Common myeloid progenitor, CD34-positive (primary cell): ENCODE measurements at regions of chr15 and their contacts with region 1.

Region 1: DNA sequence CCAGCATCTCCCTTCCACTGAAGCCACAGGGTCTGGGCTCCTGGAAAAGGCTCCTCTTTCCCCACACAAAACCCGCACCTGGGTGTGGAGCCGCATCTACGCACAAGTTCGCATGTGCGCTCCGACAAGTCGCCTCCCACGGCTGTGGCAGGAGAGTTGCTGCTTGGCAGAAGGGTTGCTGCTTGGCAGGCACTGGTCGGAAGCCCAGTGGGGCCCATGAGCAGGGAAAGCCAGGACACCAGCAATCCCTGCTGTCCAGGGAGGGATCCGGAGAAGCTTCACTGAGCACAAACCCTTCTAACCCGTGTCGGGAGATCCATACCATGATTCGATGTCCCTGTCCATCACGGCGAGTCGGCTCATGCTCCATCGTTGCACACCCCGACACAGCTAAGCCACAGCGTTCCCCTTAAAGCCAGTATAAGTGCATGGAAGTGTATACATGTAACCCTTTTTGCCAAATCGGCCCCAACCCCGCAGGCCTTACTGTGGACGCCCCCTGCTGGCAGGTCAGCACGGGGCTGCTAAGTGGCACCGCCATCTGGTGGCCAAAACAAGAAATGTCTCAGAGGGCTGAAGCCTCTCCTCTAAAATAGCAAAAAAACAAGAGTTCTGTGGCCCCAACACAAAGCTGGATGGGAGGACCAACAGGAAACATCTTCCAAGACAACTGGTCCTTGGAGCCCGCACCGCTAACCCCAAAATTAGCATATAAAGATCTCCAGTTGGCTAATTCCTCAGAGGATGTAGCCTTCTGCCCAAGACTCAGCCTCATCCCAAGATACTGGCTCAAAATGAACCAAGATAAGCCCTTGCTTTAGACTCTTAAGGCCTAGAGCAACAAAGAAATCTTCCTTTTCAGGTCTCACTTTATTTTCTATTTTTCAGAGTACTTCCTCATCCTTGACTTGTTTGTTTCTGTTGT is 8.3 kb downstream of the ANKRD63 start:
- DNase-seq: peak; percentile 86 to 93 (median 91)
- H3K4me3 ChIP-seq: no peak overlapping the region
- H3K27ac ChIP-seq: no peak overlapping the region
- H3K4me1 ChIP-seq: peaks cover 0 to 42% (median 23%) of the 10 kb centered on the region in 4 experiments
- H3K27me3 ChIP-seq: no peaks in the 10 kb centered on the region

Region 2: DNA sequence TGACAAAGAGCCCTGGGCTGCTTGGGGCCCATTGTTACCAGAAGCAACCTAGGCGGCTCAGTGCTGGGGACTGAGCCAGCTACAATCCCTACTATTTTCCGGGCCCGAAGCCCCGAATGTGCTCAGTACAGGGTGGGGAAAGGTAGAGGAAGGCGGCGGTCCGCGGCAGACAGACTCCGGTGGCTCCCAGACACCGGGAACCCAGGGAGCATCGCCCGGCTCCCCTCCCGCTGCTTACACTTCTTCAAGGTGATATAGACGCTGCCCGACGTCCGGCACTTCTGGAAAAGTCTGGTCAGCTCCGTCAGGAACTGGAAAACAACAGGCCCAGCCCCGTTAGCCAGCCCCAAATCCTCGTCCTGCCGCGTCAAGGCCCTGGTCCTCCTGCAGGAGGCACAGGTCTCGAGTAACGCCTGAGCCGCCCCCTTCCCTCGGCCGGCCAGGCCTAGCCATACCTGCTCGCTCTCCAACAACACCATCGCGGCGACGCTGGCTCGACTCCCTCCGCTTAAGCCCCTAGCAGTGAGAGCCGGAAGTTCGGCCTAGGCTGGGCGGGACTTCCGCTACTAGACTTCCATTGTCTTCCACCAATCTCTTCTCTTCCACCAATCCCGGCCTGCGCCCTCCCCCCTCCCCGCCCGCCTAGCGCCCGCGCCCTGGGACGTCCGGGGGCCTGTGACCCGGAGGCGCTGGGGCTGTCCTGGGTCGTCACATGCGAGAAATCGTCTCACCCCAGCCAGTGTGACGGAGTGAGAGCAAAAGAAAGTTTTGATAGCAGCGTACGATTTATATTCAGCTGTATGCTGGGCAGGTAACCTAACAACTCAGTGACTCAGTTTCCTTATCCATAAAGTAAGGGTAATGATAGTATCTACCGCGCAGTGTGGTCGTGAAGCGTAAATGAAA is 235.7 kb before region 1 on chr15 and contains the start of gene SRP14:
- CTCF ChIA-PET with region 1: interaction called, 22 read pairs
- POLR2A ChIA-PET with region 1: no interaction called
- DNase-seq: peak; percentile 95 to 97 (median 96)
- H3K4me3 ChIP-seq: peak within 1 kb of the TSS; percentile 59 to 97 (median 94)
- H3K27ac ChIP-seq: peak within 1 kb of the TSS; percentile 92 to 96
- H3K4me1 ChIP-seq: peaks cover 7 to 24% (median 17%) of the 10 kb centered on the region in 4 experiments
- H3K27me3 ChIP-seq: no peaks in the 10 kb centered on the region

Region 3: DNA sequence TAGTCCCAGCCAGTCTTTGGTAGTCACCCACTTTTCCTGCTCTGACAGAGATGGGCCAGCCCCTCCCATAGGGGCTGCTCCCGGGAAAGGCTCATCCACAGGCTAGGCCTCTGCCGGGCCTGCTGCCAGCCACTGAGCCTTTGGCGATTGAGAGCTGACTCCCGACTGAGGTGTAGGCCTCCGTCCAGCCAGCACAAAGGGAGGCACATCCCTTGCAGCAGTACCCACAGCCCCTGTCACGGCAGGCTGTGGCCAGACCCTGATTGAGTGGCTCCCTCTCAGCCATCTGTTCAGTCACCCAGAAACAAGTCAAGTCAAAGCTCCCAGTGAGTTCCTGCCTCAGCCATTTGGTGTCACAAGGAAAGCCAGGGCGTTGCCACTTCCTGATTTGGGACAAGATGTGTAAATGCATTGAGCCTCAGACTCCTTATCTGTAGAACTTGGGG is 42.0 kb before region 1 on chr15:
- CTCF ChIA-PET with region 1: interaction called, 98 read pairs
- POLR2A ChIA-PET with region 1: no interaction called
- DNase-seq: no peak
- H3K4me3 ChIP-seq: no peak overlapping the region
- H3K27ac ChIP-seq: no peak overlapping the region
- H3K4me1 ChIP-seq: peaks cover 4 to 24% (median 14%) of the 10 kb centered on the region in 4 experiments
- H3K27me3 ChIP-seq: no peaks in the 10 kb centered on the region

Region 4: DNA sequence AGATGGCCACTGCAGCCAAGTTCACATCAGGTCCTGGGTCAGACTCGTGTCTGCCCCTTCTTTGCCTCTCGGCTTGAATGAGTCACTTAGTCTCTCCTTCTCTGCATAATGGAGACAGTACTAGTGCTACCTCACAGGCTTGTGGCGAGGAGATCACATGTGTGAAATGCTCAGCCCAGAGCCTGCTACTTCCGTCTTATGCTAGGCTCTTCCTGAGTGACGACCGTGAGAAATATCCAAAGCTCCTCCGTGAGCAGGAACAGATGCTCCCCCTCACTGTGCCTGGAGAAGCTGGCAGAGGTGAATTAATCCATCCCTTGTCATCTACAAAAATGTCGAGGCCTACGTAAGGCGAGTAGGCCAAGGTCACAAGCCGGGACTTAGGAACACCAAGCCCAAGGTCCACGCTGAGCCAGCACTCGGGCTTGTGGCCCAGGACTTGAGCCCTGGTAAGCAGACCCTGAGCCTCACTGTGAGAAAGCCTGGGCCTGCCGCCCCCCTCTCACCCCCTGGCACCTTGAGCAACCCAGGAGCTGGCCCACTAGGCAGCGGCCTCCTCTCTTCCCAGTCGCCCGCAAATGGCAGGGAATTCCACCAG is 17.9 kb before region 1 on chr15:
- CTCF ChIA-PET with region 1: interaction called, 49 read pairs
- POLR2A ChIA-PET with region 1: no interaction called
- DNase-seq: peak in 1 of 3 donors; percentile 40
- H3K4me3 ChIP-seq: no peak overlapping the region
- H3K27ac ChIP-seq: no peak overlapping the region
- H3K4me1 ChIP-seq: peaks cover 0 to 17% (median 16%) of the 10 kb centered on the region in 4 experiments
- H3K27me3 ChIP-seq: peaks cover 0 to 29% (median 11%) of the 10 kb centered on the region in 5 experiments

Region 5: DNA sequence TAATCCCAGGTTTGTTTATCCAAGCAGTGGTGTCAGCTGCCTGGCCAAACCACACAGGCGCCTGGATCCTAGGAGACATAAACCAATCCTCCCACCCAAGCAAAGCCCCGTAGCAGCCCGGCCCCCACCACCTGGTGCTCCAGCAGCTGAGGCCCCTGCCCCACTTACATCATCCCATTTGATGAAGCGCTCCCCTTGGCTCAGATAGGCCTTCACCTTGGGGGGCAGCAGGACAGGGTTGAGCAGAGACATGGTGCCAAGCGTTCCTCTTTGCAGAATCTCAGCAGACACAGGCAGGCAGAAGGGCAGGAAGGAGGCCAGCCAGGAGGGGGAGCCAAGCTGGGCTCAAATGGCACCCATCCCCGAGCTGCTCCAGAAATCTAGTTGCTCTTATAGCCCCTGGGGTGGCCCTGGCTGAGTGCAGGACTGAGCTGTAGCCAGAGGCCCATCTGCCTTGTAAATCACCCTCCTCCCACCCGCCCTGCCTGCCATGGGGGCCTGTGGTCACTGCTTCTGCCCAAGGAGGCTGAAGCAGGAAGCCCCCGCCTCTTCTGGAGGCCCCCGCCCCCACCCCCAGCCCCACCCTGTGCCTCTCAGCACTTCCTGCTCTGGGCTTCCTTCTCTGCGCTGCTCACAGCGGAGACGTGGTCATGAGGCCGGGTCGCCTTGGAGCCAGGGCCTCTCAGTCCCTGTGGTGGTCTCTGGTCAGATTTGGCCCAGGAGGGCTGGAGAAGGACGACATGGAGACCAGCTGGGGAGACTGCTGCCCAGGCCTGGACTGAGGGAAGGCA is 33.0 kb after region 1 on chr15 and contains the start of gene PLCB2:
- CTCF ChIA-PET with region 1: interaction called, 337 read pairs
- POLR2A ChIA-PET with region 1: interaction called, 8 read pairs
- DNase-seq: peak; percentile 77 to 87 (median 83)
- H3K4me3 ChIP-seq: peak within 1 kb of the TSS; percentile 53 to 92 (median 82)
- H3K27ac ChIP-seq: peak within 1 kb of the TSS; percentile 56 to 81
- H3K4me1 ChIP-seq: peaks cover 4 to 64% (median 50%) of the 10 kb centered on the region in 4 experiments
- H3K27me3 ChIP-seq: no peaks in the 10 kb centered on the region

Region 6: GRCh38 chr15:40407330-40407990 is 132.8 kb after region 1 on chr15:
- CTCF ChIA-PET with region 1: no interaction called
- POLR2A ChIA-PET with region 1: no interaction called
- DNase-seq: no peak
- H3K4me3 ChIP-seq: peak overlapping the region in 3 of 7 experiments; percentile 26 to 38 (median 34)
- H3K27ac ChIP-seq: peak overlapping the region in 1 of 2 experiments; percentile 14
- H3K4me1 ChIP-seq: peaks cover 10 to 29% (median 25%) of the 10 kb centered on the region in 4 experiments
- H3K27me3 ChIP-seq: no peaks in the 10 kb centered on the region

Region 7: DNA sequence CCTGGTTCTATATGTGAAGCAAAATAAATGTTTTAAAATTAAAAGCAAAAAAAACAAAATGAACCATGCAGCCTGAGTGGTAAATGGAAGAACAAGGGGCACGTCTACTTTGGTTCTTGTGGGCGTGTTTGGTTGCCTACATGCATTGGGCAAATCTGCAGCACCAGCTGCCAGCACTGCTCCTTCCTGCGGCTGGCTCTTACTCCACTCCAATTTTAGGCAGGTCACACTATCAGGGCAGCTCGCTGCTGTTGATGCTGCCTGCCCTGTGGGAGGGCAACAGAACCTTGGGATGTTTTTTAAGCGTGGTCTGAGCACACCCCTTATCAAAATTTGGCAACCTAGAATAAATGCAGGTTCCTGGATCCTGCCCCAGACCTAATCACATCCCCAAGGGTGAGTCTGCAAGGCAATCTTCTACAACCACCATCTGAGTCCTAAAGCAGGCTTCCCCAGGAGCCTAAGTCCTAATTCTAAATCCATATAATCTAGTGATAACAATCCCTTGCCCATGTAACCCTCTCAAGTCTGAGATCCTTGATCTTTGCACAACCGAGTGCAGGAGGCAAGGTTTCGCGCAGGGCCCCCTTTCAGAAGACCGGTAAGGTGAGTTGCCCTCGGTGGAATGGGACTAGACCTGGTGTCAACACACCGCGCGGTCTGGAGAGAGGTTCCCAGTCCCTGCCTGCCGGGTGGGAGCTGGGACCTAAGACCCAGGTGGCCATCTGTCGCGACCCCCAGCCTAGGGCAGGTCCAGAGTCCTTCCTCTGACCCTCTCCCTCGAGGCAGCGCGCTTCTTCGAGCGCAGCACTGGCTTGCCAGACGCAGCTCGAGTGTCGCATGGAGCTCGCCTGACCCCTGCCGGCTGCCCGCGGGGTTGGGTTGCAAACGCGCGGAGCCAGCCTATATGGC is 146.9 kb after region 1 on chr15:
- CTCF ChIA-PET with region 1: interaction called, 11 read pairs
- POLR2A ChIA-PET with region 1: no interaction called
- DNase-seq: peak; percentile 65 to 81 (median 80)
- H3K4me3 ChIP-seq: peak overlapping the region in 1 of 7 experiments; percentile 50
- H3K27ac ChIP-seq: no peak overlapping the region
- H3K4me1 ChIP-seq: peaks cover 0 to 10% (median 5%) of the 10 kb centered on the region in 4 experiments
- H3K27me3 ChIP-seq: no peaks in the 10 kb centered on the region